H1 (cell line): ENCODE measurements at regions of chr9 and their contacts with region 1.

Region 1: DNA sequence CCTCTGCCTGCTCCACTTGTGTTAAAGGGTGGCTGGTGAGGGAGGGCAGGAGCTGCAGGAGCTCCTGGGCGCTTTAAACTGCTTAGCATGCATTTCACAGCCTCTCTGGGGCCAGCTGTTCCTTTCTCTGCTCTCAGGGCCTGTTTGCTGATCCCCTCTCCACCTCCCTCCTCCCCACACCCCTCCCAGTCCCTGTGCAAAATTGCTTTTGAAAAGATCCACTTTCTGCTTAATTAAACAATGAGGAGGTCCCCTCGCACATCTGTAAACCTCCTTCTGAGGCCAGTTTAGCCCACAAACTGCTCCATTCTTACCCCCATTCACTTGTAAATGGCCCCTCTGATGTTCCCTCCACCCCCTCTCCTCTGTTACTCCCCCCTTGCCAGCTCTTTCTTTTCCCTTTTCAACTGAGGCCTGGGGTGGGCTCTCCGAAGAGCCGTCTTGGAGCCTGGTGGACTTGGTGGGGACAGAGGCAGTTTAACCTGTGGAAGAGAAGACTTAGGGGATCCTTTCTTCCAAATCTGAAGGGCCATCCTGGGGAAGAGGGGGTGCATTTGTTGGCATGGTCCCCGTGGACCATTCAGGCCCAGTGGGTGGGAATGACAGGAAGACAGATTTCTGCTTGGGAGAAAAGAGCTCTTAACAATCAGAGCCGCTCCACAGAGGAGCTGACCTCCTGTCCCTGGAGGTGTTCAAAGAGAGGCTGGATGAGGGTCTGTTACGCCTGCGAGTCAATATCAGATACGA is 12.0 kb downstream of the URM1 start:
- DNase-seq: peak; percentile 68 to 82
- H3K4me3 ChIP-seq: peak overlapping the region in 3 of 4 experiments; percentile 11 to 44 (median 24); a peak in 5 of 8 replicates
- H3K27ac ChIP-seq: no peak overlapping the region
- H3K4me1 ChIP-seq: peaks cover 26 to 40% (median 36%) of the 10 kb centered on the region in 4 experiments
- H3K27me3 ChIP-seq: peaks cover 9 to 68% (median 60%) of the 10 kb centered on the region in 4 experiments
- CTCF ChIP-seq: no peak
- EP300 ChIP-seq: no peak
- POLR2A ChIP-seq: no peak
- RAD21 ChIP-seq: no peak

Region 2: DNA sequence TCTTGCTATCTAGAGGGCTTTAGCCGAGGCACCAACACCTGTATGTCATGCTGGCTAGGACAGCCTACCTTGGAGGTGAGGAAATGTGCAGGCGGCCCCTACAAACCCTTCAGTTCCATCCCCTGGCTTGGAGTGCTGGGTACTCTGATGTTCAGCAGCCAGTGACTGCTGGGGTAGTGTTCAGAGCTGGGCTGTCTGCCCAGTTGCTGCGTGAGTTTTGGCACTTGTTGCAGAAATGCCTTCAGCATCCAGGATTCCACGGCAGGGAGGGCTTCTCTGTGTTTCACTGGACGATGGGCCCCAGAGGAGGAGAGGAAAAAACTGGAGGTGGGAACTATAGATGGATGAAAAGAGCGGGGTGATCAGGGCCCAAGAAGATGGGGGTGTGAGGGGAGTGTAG is 96.7 kb before region 1 on chr9:
- CTCF ChIA-PET with region 1: no interaction called
- POLR2A ChIA-PET with region 1: no interaction called
- DNase-seq: no peak
- H3K4me3 ChIP-seq: no peak overlapping the region
- H3K27ac ChIP-seq: no peak overlapping the region
- H3K4me1 ChIP-seq: no peaks in the 10 kb centered on the region
- H3K27me3 ChIP-seq: no peaks in the 10 kb centered on the region
- CTCF ChIP-seq: no peak
- EP300 ChIP-seq: no peak
- POLR2A ChIP-seq: no peak
- RAD21 ChIP-seq: no peak

Region 3: DNA sequence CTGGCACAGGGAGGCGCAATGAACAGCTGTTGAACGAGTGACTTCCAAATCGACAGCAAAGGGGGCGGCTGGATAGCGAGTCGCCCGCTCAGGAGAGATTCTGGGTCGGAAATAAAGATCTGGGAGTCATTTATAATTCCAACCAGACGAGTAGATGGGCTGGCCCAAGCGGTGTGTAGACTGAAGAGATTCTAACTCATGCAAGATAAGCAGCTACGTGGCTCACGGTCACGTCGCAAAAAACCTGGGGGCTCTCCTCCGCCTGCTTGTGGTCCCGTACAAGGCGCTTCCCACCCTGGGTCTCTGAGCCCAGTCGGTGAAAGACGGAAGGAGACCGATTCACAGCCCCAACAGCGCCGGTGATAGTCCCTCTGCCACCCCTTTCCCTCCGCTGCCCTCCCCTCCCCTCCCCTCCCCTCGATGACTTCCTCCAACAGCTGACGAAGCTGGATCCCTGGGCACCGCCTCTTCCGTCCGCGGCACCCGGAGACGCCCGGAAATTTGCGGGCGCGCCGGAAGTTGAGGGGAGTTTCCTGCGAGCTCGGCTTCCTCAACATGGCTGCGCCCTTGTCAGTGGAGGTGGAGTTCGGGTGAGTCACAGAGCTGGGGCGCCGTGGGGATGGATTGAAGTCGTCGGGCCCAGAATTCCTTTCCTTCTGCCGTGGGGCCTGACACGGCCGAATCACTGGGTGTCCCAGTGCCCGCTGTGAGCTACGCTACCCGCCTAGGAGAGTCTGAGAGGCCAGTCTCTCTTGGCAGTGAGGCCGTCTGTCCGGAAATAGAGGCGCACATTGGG is 12.2 kb before region 1 on chr9 and contains the start of gene URM1:
- CTCF ChIA-PET with region 1: interaction called, 323 read pairs
- POLR2A ChIA-PET with region 1: interaction called, 52 read pairs
- DNase-seq: peak; percentile 70 to 91
- H3K4me3 ChIP-seq: peak within 1 kb of the TSS; percentile 82 to 96 (median 95)
- H3K27ac ChIP-seq: no peak within 1 kb of the TSS; the same call in 1 of the 2 replicates
- H3K4me1 ChIP-seq: peaks cover 0 to 8% (median 3%) of the 10 kb centered on the region in 4 experiments; a peak in 4 of 7 replicates
- H3K27me3 ChIP-seq: peaks cover 9 to 24% (median 13%) of the 10 kb centered on the region in 4 experiments
- CTCF ChIP-seq: no peak
- EP300 ChIP-seq: no peak
- POLR2A ChIP-seq: peak in 1 of 2 experiments; percentile 63; a peak in 2 of 3 replicates
- RAD21 ChIP-seq: no peak
- total RNA-seq, gene URM1: 60.5 and 62.3 TPM in 2 replicates

Region 4: GRCh38 chr9:128396970-128397613 is 13.9 kb after region 1 on chr9:
- CTCF ChIA-PET with region 1: interaction called, 544 read pairs
- POLR2A ChIA-PET with region 1: interaction called, 63 read pairs
- DNase-seq: peak in 1 of 2 experiments; percentile 57
- H3K4me3 ChIP-seq: no peak overlapping the region
- H3K27ac ChIP-seq: no peak overlapping the region
- H3K4me1 ChIP-seq: peaks cover 9 to 28% (median 21%) of the 10 kb centered on the region in 4 experiments
- H3K27me3 ChIP-seq: peaks cover 85 to 100% (median 96%) of the 10 kb centered on the region in 4 experiments
- CTCF ChIP-seq: no peak
- EP300 ChIP-seq: peak in 1 of 2 experiments; percentile 43; a peak in 1 of 3 replicates
- POLR2A ChIP-seq: no peak
- RAD21 ChIP-seq: no peak

Region 5: DNA sequence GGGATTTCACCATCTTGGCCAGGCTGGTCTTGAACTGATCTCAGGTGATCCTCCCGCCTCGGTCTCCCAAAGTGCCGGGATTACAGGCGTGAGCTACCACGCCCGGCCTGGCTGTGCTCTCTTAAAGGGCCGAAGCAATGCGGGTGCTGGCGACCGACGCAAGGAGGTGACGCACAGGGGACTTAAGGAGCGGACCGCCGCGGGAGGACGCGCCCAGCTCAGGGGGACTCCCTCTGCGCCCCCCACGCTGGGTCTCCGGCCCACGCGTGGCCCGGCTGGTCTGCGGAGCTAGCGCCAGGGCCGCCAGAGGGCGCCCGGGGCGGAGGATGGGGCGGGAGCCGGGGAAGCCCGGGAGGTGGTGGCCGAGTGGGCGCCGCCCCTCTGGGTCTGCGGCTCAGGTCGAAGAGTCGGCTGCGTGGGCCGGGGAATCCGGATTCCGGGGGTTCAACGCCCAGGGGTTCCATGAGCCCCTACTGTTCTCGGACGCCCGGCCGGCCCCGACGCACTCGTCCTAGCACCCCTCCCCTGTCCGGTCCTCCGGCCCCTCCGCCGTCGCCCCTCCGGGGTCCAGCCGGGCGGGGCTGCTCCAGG is 37.0 kb after region 1 on chr9:
- CTCF ChIA-PET with region 1: interaction called, 544 read pairs
- POLR2A ChIA-PET with region 1: interaction called, 8 read pairs
- DNase-seq: peak in 1 of 2 experiments; percentile 83
- H3K4me3 ChIP-seq: peak overlapping the region; percentile 47 to 89 (median 60)
- H3K27ac ChIP-seq: no peak overlapping the region
- H3K4me1 ChIP-seq: peaks cover 6 to 18% (median 8%) of the 10 kb centered on the region in 4 experiments; a peak in 6 of 7 replicates
- H3K27me3 ChIP-seq: peaks cover 5 to 48% (median 34%) of the 10 kb centered on the region in 4 experiments; a peak in 6 of 7 replicates
- CTCF ChIP-seq: peak in 2 of 3 experiments; percentile 51 to 63; a peak in 3 of 4 replicates
- EP300 ChIP-seq: no peak
- POLR2A ChIP-seq: no peak
- RAD21 ChIP-seq: peak; percentile 20 to 40; a peak in 3 of 4 replicates

Region 6: GRCh38 chr9:128523199-128523925 is 140.2 kb after region 1 on chr9:
- CTCF ChIA-PET with region 1: no interaction called
- POLR2A ChIA-PET with region 1: no interaction called
- DNase-seq: no peak
- H3K4me3 ChIP-seq: no peak overlapping the region
- H3K27ac ChIP-seq: no peak overlapping the region
- H3K4me1 ChIP-seq: no peaks in the 10 kb centered on the region; a peak in 1 of 7 replicates
- H3K27me3 ChIP-seq: no peaks in the 10 kb centered on the region
- CTCF ChIP-seq: no peak
- EP300 ChIP-seq: no peak
- POLR2A ChIP-seq: no peak
- RAD21 ChIP-seq: no peak

Region 7: DNA sequence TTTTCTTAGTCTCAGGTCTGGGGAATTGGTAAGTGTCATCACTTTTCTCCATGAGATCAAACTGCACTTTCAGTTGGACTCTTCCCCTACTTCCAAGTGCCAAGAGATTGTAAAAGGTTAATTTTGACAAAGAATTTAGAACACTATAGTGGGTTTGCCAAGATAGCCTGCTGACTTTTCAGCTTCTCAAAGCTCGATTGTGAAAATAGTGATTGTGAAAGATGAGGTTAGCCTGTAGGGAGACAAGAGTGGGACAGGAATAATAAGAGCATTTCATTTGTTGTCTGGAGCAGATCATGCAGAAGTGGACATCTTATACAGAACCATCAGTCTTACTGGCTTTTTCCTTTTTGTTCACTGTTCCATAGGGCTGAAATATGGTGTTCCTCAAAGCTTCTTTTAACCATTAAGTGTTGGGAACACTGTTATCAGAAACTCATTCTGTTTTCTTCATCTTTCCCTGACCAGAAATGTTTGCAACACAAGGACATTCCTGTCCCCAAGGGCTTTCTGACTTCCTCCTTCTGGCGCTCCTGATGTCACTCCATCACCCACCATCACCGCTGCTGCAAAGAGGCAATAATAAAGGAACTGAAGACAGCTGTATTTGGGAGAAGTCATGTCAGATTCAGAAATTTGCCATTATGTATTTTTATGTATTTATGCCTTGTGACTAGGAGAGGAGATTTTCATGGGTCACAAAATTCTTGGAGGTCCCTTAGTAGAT is 157.6 kb after region 1 on chr9:
- CTCF ChIA-PET with region 1: no interaction called
- POLR2A ChIA-PET with region 1: no interaction called
- DNase-seq: no peak
- H3K4me3 ChIP-seq: no peak overlapping the region
- H3K27ac ChIP-seq: no peak overlapping the region
- H3K4me1 ChIP-seq: no peaks in the 10 kb centered on the region
- H3K27me3 ChIP-seq: no peaks in the 10 kb centered on the region
- CTCF ChIP-seq: no peak
- EP300 ChIP-seq: no peak
- POLR2A ChIP-seq: no peak
- RAD21 ChIP-seq: no peak